ENCODE measurements at regions of chr11 and their contacts with region 1.

Region 1: DNA sequence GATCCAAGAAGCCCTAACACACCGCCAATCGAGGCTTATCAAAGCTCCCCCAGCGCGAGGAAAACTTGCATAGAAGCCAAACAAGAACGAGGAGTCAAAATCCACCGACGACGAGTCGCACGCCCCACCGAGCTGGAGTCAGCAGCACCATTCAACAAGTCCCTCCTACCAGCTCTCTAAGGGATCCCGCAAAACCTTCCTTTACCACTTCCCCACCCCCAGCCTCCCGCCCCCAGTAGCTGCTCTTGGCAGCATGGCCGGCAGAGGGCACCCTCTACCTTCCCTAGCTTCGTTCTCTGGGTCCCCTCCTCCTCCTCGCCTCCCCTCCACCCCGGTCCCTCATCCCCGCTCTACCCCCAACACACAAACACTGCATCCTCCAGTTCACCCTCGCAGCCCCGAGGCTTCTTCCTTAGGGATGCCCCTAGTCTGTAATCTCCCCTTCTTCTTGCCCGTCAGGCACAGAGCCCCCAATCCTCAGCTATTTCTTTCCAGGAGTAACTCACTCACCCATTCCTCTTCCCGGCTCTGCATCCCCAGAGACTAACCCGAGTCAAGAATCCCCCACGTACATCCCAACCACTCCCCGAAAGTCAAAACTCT is 1.3 kb downstream of the BDNF start:
- DNase-seq: peak; percentile 71 to 86 (median 82)
- ATAC-seq: peak; percentile 87 to 90 (median 89)
- H3K4me3 ChIP-seq: peak overlapping the region; percentile 43 to 73 (median 63)
- H3K27ac ChIP-seq: peak overlapping the region; percentile 31 to 87 (median 74)
- H3K4me1 ChIP-seq: peaks cover 0 to 35% (median 12%) of the 10 kb centered on the region in 12 donors
- H3K27me3 ChIP-seq: peaks cover 0 to 72% (median 15%) of the 10 kb centered on the region in 9 donors
- CTCF ChIP-seq: peak; percentile 60 to 88 (median 74)
- POLR2A ChIP-seq: no peak

Region 2: GRCh38 chr11:27506200-27507182 is 192.5 kb before region 1 on chr11 and contains the start of gene LIN7C:
- intact Hi-C with region 1: loop called in 1 of 10 experiments (anchors 10 kb)
- DNase-seq: peak; percentile 96 to 97 (median 97)
- ATAC-seq: peak; percentile 97 to 99 (median 98)
- H3K4me3 ChIP-seq: peak within 1 kb of the TSS; percentile 59 to 99 (median 71)
- H3K27ac ChIP-seq: peak within 1 kb of the TSS; percentile 75 to 96 (median 92)
- H3K4me1 ChIP-seq: peaks cover 0 to 56% (median 35%) of the 10 kb centered on the region in 12 donors
- H3K27me3 ChIP-seq: no peaks in the 10 kb centered on the region
- CTCF ChIP-seq: peak in 3 of 12 donors; percentile 15 to 29 (median 28)
- POLR2A ChIP-seq: peak; percentile 41 to 91
- total RNA-seq, gene LIN7C: 13.2 to 24.1 (median 16.6) TPM

Region 3: DNA sequence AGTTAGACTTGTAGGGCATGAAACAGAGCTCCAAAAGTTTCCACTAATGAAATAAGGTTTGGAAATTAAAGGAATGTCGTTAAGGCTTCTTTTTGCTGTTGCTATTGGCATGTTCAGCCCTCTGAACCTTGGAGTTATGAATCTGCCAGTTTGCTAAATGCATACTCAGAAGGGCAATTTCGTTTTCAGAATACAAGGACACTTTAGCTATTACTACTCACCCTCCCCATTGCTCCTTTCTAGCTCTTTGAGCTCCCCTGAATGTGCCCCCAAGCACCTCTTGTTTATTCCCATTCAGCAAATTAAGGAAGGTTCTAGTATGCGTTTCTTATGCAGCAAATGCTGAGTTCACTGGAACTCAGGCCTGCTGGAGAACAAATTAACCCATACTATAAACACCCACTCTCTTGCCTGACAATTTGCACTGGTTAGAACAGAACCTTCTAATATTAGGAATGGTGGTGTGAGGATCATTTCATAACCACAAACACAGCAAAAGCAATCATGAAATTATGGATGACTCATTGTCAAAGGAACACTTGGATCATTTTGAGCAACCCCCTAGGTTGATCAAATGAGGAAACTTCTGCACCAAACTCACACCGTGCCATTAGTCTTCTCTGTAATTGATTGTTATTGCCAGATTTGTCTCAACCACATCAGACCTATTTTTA is 166.2 kb before region 1 on chr11:
- intact Hi-C with region 1: loop called in 4 of 10 experiments (anchors 5 to 10 kb)
- DNase-seq: no peak
- ATAC-seq: no peak
- H3K4me3 ChIP-seq: no peak overlapping the region
- H3K27ac ChIP-seq: no peak overlapping the region
- H3K4me1 ChIP-seq: peaks cover 0 to 12% (median 0%) of the 10 kb centered on the region in 12 donors
- H3K27me3 ChIP-seq: no peaks in the 10 kb centered on the region
- CTCF ChIP-seq: no peak
- POLR2A ChIP-seq: no peak

Region 4: DNA sequence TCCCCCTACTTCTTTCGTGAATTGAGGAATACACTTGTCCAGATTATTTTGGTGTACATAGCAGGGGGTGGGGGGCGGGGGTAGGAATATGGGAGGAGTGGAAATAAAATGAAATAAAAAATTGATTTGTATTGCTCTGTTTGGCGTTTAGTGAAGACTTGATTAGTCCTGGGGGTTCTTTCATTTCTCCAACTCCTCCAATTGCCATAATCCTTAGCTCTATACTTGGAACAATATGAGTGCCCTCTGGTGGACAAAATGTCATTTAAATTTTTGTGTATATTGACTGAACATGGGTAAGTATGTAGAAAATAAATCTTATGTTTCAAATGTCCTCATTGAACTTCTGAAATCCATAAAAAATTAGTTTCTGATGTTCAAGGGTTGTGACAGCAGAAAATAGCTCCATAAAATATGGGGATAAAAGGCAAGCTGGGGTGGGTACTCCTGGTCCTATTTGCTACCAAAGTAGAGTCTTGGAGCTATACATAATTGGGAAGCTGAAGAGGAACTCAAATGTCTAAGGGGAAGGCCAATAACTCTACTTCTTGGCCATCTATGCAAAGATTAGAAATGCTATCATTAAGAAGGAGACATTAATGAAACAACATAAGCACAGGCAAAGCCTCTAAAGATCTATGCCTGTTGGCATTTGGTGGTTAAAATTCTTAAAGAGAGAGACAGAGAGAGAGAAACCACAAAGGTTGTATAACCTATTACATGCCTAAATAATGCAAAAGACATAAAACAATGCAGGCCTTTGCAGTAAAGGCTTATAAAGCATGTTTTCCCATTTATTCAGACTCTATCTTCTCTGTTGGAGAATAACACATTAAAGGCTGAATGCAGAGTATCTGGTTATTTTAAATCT is 830.8 kb after region 1 on chr11:
- intact Hi-C with region 1: loop called in 9 of 10 experiments (anchors 2 to 5 kb)
- DNase-seq: no peak
- ATAC-seq: peak in 1 of 4 donors; percentile 57
- H3K4me3 ChIP-seq: no peak overlapping the region
- H3K27ac ChIP-seq: no peak overlapping the region
- H3K4me1 ChIP-seq: no peaks in the 10 kb centered on the region
- H3K27me3 ChIP-seq: no peaks in the 10 kb centered on the region
- CTCF ChIP-seq: peak; percentile 22 to 63 (median 39)
- POLR2A ChIP-seq: no peak

Region 5: GRCh38 chr11:29328961-29329441 is 1630.0 kb after region 1 on chr11:
- intact Hi-C with region 1: loop called in 8 of 10 experiments (anchors 2 to 10 kb)
- DNase-seq: no peak
- ATAC-seq: no peak
- H3K4me3 ChIP-seq: no peak overlapping the region
- H3K27ac ChIP-seq: no peak overlapping the region
- H3K4me1 ChIP-seq: no peaks in the 10 kb centered on the region
- H3K27me3 ChIP-seq: no peaks in the 10 kb centered on the region
- CTCF ChIP-seq: peak in 8 of 12 donors; percentile 16 to 48 (median 28)
- POLR2A ChIP-seq: no peak